K562 (cell line): ENCODE measurements at regions of chr7 and their contacts with region 1.

Region 1: GRCh38 chr7:115116773-115117715 is 195.2 kb downstream of the MDFIC start:
- DNase-seq: no peak
- ATAC-seq: no peak
- H3K4me3 ChIP-seq: no peak overlapping the region
- H3K27ac ChIP-seq: no peak overlapping the region
- H3K4me1 ChIP-seq: no peaks in the 10 kb centered on the region
- H3K27me3 ChIP-seq: no peaks in the 10 kb centered on the region
- CTCF ChIP-seq: no peak
- EP300 ChIP-seq: no peak
- POLR2A ChIP-seq: no peak
- RAD21 ChIP-seq: no peak

Region 2: DNA sequence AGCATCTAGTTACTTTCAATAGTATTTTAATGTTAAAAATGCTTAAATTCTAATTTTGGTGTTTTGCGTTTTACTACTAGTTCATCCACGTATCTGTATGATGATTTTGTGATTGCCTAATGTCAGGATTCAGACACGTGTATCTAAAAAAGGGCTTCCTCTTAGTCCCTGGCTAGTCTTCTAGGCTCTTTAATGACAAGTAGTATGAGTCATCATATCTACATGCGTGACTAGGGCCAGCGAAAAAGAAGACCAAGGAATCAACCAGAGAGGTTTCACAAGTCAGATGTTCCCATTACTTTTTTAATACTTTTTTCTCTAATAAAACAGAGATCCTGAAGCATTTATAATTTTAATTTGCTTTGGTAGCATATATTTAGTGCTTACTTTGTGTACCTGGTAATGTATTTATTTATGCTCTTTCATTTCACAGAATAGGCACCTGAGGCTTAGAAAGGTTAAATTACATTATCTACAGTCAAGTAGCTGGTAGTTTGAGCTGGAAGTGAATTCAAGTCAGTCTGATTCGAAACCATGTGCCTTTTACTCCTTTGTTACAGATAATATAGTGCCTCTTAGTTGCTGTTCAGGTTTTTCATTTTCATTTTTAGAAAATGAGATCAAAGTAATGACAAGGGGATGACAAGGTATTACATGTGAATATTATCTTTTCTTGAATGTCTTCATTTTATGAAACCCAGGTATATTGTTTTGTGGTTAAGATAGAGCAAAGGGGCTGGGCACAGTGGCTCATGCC is 562.1 kb before region 1 on chr7:
- CTCF ChIA-PET with region 1: no interaction called
- POLR2A ChIA-PET with region 1: no interaction called
- in situ Hi-C with region 1: no loop called
- intact Hi-C with region 1: no loop called
- DNase-seq: no peak
- ATAC-seq: no peak
- H3K4me3 ChIP-seq: no peak overlapping the region
- H3K27ac ChIP-seq: no peak overlapping the region
- H3K4me1 ChIP-seq: no peaks in the 10 kb centered on the region
- H3K27me3 ChIP-seq: no peaks in the 10 kb centered on the region
- CTCF ChIP-seq: no peak
- EP300 ChIP-seq: no peak
- POLR2A ChIP-seq: no peak
- RAD21 ChIP-seq: no peak

Region 3: DNA sequence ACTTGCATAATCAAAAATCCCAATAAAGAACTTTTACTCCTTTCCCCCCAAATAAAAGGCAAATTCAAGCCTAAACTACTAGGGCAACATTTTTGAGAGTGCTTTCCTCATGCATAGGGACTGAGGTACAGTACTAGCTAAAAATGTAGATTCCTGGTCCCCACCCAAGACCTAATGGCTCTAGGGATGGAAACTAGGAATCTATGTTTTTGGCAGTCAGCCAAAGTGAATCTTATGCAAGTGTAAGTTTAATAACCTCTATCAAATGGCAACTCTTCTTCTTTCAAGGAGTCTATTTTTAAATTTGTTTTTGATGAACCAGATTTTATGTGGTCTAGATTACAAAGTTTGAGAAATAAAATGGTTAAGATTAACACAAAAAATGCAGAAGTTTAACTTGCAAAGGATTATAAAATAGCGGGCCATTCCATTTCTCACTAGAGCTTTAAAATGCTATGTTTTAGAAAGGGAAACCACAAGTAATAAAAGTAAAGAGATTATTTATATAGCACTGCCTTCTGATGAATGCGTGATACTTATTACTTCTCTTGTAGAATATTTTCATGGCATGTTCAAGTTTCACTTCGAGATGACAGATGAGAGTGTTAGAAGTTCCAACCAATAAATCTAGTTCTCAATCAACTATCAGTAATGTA is 265.5 kb before region 1 on chr7:
- CTCF ChIA-PET with region 1: no interaction called
- POLR2A ChIA-PET with region 1: no interaction called
- in situ Hi-C with region 1: no loop called
- intact Hi-C with region 1: loop called (anchors 5 kb)
- DNase-seq: no peak
- ATAC-seq: no peak
- H3K4me3 ChIP-seq: no peak overlapping the region
- H3K27ac ChIP-seq: no peak overlapping the region
- H3K4me1 ChIP-seq: no peaks in the 10 kb centered on the region
- H3K27me3 ChIP-seq: no peaks in the 10 kb centered on the region
- CTCF ChIP-seq: no peak
- EP300 ChIP-seq: no peak
- POLR2A ChIP-seq: no peak
- RAD21 ChIP-seq: no peak